AG04449 (cell line): ENCODE measurements at regions of chr20 and their contacts with region 1.

Region 1: DNA sequence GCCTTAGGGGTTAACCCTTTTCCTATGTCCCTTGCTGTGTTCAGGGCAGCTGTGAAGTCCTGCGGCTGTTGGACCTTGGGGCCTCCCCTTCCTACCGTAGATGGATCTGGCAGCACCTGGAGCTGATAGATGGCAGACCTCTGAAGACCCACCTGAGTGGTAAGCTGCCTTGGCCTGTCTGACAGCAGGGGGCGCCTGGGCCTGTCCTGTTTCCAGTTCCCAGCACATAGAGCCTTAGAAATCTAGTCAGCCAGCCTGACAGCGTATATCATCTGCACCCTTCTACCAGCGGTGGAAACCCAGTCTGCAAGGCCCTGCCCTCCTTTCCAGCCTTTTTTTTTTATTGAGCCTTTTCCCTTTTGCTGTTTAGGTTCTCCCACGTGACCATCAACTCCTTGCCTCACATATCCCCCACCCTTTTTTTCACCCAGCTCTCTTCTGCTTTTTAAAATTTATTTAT is 26.6 kb downstream of the CNBD2 start:
- DNase-seq: no peak
- H3K4me3 ChIP-seq: no peak overlapping the region
- CTCF ChIP-seq: peak; percentile 96

Region 2: GRCh38 chr20:35954200-35954906 is 40.7 kb before region 1 on chr20 and contains the start of gene SCAND1:
- CTCF ChIA-PET with region 1: interaction called, 54 read pairs
- POLR2A ChIA-PET with region 1: interaction called, 7 read pairs
- DNase-seq: peak; percentile 80
- H3K4me3 ChIP-seq: peak within 1 kb of the TSS; percentile 95
- CTCF ChIP-seq: peak; percentile 100

Region 3: DNA sequence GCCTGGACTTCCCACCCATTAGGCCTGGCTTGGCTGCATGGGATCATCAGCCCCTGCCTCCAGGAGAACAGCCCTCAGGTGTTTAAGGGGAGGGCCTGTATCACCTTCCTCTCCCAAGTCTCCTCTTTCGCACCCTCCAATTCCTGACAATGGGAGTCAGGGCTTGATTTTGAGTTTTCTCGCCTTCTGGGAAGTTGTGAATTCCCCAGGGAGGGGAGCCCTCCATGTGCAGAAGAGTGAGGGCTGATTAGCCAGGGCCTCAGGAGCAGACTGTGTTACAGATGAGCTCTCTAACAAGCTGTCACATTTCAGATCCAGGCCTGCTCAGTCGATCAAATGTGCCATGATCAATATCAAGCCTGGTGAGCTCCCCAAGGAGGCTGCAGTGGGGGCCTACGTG is 15.8 kb after region 1 on chr20:
- CTCF ChIA-PET with region 1: interaction called, 93 read pairs
- POLR2A ChIA-PET with region 1: no interaction called
- DNase-seq: no peak
- H3K4me3 ChIP-seq: no peak overlapping the region
- CTCF ChIP-seq: no peak

Region 4: GRCh38 chr20:36085686-36086267 is 90.8 kb after region 1 on chr20:
- CTCF ChIA-PET with region 1: interaction called, 23 read pairs
- POLR2A ChIA-PET with region 1: no interaction called
- DNase-seq: no peak
- H3K4me3 ChIP-seq: no peak overlapping the region
- CTCF ChIP-seq: no peak

Region 5: GRCh38 chr20:36128463-36129159 is 133.6 kb after region 1 on chr20:
- CTCF ChIA-PET with region 1: interaction called, 971 read pairs
- POLR2A ChIA-PET with region 1: no interaction called
- DNase-seq: peak; percentile 23
- H3K4me3 ChIP-seq: no peak overlapping the region
- CTCF ChIP-seq: no peak

Region 6: GRCh38 chr20:36439040-36439730 is 444.2 kb after region 1 on chr20:
- CTCF ChIA-PET with region 1: interaction called, 13 read pairs
- POLR2A ChIA-PET with region 1: no interaction called
- DNase-seq: no peak
- H3K4me3 ChIP-seq: no peak overlapping the region
- CTCF ChIP-seq: peak; percentile 89